Activated CD4-positive, alpha-beta memory T cell treated with anti-CD3 and anti-CD28 coated beads for 36 hours (primary cell): ENCODE measurements at regions of chr13 and their contacts with region 1.

Region 1: DNA sequence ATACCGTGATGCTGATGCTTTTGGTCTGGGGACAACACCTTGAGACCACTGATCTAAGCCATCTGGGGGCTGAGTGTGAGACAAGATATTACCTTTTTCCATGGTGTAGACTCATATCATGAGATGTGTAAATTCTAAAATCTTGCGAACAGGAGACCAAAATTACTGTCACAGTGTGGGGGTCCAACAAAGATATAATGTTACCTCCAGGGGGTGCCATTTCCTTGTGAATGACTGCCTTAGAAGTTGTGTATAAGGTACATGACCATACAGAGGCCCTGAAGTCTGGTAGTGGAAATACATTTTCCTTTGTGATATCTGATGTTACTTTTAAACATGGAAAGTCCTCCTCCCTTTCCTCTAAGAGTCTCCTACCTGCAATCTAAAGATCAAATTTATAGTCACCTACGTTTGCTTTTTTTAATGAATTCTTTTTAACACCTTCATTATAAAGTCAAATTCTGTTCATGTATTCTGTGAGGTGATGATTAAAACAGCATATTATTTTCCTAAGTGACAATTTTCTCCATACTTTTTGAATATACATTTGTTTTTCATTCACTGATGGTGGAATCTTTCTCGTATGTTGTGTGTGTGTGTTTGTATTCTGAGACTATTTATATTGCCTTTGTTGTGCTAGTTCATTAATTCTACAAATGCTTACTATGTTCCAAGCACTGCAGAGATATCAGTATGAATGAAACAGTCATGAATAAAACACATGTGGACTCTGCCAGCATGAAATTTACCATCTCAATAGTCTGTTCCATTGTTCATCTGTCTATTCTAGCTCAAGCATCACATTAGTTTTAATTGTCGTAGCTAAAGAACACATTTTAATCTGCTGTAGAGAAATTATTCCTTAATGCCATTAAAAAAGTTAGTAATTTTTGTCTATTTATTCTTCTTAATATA is 113.7 kb downstream of the RFC3 start:
- DNase-seq: no peak
- H3K4me3 Mint-ChIP-seq: no peak overlapping the region
- H3K27ac Mint-ChIP-seq: no peak overlapping the region
- H3K4me1 Mint-ChIP-seq: no peaks in the 10 kb centered on the region
- H3K27me3 Mint-ChIP-seq: no peaks in the 10 kb centered on the region

Region 2: DNA sequence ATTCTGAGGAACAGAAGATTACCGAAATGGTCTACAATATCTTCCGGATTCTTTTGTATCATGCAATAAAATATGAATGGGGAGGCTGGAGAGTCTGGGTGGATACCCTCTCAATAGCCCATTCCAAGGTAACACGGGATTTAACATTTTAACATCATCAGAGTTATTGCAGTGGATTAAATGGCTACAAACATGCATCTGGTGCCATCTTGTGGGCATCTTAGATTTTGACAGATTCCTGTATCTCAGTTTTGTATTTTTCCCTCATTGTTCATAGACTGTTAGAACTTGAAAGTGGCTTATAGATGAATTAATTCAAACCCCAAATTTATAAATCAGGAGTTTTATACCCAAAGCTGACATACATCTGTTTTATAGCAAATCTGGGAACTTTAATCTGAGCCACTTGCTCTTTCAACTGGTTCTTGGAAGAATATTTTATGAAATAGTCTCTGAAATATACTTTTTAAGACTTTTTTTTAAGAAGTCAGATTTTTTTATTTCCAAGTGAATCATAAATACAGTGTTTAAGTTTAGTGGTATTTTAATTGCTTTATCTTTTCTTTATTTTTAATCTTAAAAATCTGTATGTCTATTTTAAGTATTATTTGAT is 1225.6 kb after region 1 on chr13:
- CTCF ChIA-PET with region 1: no interaction called
- POLR2A ChIA-PET with region 1: no interaction called
- intact Hi-C with region 1: loop called (anchors 5 kb)
- DNase-seq: peak; percentile 16
- H3K4me3 Mint-ChIP-seq: no peak overlapping the region
- H3K27ac Mint-ChIP-seq: no peak overlapping the region
- H3K4me1 Mint-ChIP-seq: peaks cover under 1% of the 10 kb centered on the region
- H3K27me3 Mint-ChIP-seq: no peaks in the 10 kb centered on the region